PC-9 (cell line): ENCODE measurements at regions of chr3 and their contacts with region 1.

Region 1: GRCh38 chr3:188954590-188955208 is 217.1 kb upstream of the TPRG1 start:
- DNase-seq: peak; percentile 67 to 85
- H3K4me3 ChIP-seq: no peak overlapping the region
- H3K27ac ChIP-seq: no peak overlapping the region
- H3K4me1 ChIP-seq: peaks cover 21% of the 10 kb centered on the region
- H3K27me3 ChIP-seq: no peaks in the 10 kb centered on the region
- CTCF ChIP-seq: peak; percentile 98

Region 2: GRCh38 chr3:187738331-187739093 is 1216.2 kb before region 1 on chr3:
- CTCF ChIA-PET with region 1: interaction called, 129 read pairs
- POLR2A ChIA-PET with region 1: interaction called, 11 read pairs
- intact Hi-C with region 1: loop called (anchors 1 kb)
- DNase-seq: peak; percentile 82 to 87
- H3K4me3 ChIP-seq: peak overlapping the region; percentile 53
- H3K27ac ChIP-seq: 0 out of 2 replicates have a peak overlapping the region, but pooled peaks have one; percentile 3
- H3K4me1 ChIP-seq: peaks cover 55% of the 10 kb centered on the region
- H3K27me3 ChIP-seq: no peaks in the 10 kb centered on the region
- CTCF ChIP-seq: peak; percentile 85

Region 3: DNA sequence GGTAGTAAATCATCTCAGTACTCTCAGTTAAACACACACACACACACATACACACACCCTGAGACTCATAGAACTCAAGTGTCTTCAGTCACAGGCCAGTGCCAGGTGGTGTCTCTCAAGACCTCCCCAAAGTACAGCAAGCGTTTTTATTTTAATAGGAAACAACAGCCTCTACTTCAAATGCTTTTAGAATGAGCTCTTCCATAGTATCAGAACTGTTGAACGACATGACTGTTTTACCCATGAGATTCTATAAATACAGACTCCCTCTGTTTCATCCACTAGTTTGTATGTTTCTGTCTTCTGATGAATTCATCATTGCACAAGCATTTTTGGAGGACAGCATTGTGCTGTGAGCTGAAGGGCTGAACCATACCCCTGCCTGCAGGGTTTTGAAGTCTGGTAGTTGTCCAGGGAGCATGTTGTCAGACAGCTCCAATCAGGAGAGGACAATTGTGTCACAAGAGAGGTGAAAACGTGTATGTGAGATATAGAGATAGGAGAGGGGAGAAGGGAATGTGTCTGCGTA is 1008.5 kb before region 1 on chr3:
- CTCF ChIA-PET with region 1: no interaction called
- POLR2A ChIA-PET with region 1: no interaction called
- intact Hi-C with region 1: loop called (anchors 10 kb)
- DNase-seq: peak in 1 of 2 experiments; percentile 57
- H3K4me3 ChIP-seq: peak overlapping the region; percentile 45; the same call in 1 of the 2 replicates
- H3K27ac ChIP-seq: peak overlapping the region; percentile 94
- H3K4me1 ChIP-seq: peaks cover 67% of the 10 kb centered on the region
- H3K27me3 ChIP-seq: no peaks in the 10 kb centered on the region
- CTCF ChIP-seq: no peak

Region 4: GRCh38 chr3:188270423-188270972 is 684.2 kb before region 1 on chr3:
- CTCF ChIA-PET with region 1: no interaction called
- POLR2A ChIA-PET with region 1: no interaction called
- intact Hi-C with region 1: loop called (anchors 1 kb)
- DNase-seq: peak; percentile 80 to 87
- H3K4me3 ChIP-seq: no peak overlapping the region
- H3K27ac ChIP-seq: no peak overlapping the region
- H3K4me1 ChIP-seq: peaks cover 43% of the 10 kb centered on the region
- H3K27me3 ChIP-seq: no peaks in the 10 kb centered on the region
- CTCF ChIP-seq: no peak

Region 5: DNA sequence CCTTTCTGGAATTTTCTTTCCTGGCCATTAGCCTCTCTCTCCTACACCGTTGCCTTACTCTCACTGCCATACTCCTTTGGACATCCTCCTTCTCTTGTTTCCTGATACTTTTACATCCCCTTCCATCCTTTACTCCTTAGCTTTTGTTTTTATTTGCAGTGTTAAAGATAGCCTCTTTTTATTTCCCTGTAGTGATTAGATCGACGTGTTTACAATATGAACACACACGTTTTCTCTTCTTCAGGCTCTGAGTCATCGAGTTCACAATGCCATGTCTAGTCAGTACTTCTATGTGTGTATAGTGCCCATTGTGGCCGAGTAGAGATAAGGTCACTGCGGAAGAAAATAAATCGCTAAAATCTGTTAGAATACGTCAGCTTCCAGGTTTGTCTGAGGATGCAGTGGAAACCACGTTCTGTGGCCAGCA is 592.3 kb before region 1 on chr3:
- CTCF ChIA-PET with region 1: no interaction called
- POLR2A ChIA-PET with region 1: no interaction called
- intact Hi-C with region 1: loop called (anchors 2 kb)
- DNase-seq: peak; percentile 41 to 87
- H3K4me3 ChIP-seq: no peak overlapping the region
- H3K27ac ChIP-seq: peak overlapping the region; percentile 17; the same call in 1 of the 2 replicates
- H3K4me1 ChIP-seq: peaks cover 9% of the 10 kb centered on the region
- H3K27me3 ChIP-seq: no peaks in the 10 kb centered on the region
- CTCF ChIP-seq: 0 out of 2 replicates have a peak, but pooled peaks have one; percentile 38

Region 6: DNA sequence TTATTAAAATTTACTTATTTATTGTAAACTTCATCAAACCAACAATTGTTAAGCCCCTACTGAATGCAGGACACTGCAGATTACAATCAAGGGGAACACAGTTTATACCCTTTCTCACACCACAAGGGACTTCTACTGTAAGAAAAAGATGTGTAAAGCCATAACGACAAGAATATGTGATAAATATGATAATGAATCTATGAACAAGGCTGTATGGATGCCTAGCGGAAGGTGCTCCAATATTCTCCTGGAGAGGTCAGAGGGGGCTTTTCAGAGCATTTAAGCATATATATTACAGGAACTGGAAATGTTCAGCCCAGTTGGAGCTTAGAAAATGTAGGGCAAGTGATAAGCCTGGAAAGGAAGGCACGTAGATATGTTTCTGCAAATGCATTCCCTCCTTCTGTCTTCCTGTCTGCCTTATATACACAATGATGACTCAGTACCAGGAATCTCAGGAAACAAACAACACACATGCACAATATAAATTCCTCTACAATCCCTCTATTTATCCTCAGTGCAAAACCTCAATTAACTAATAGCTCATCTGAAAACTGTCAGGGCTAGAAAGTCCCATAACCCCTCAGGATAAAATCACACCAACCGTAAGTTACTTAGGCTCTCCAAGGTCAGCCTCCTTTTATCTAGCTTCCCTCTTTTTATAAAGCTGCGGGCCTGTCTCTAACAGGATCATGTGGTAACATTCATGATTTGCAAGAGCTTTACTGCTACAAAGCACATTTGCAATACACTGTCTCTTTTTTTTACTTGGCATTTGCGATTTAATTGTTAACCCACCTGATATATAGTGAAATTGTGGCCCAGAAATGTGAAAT is 407.6 kb before region 1 on chr3:
- CTCF ChIA-PET with region 1: no interaction called
- POLR2A ChIA-PET with region 1: no interaction called
- intact Hi-C with region 1: no loop called
- DNase-seq: peak; percentile 4 to 86
- H3K4me3 ChIP-seq: no peak overlapping the region
- H3K27ac ChIP-seq: peak overlapping the region; percentile 13
- H3K4me1 ChIP-seq: peaks cover 16% of the 10 kb centered on the region
- H3K27me3 ChIP-seq: no peaks in the 10 kb centered on the region
- CTCF ChIP-seq: no peak

Region 7: DNA sequence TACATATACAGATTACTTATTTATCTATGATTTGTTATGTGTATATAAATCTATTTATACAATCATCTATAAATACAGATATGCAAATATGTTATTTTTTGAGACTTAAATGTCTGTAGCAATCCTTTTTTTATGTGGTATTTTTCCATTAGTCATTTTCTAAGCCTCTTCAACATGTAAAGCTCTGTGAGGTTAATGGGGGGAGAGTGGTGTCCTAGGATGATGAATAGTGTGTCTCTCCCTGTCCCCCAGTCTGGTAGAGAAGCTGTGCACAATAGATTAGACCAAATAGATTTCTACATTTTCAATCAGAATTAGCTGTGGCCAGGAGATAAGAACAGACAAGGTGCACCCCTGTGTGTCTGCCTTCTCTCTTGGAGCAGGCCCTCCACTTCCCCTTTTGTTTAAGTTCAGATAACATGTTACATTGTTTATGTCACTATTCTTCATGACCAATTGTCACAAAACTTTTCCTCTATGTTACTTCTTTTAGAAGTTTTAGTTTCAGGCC is 346.8 kb before region 1 on chr3:
- CTCF ChIA-PET with region 1: no interaction called
- POLR2A ChIA-PET with region 1: no interaction called
- intact Hi-C with region 1: no loop called
- DNase-seq: no peak
- H3K4me3 ChIP-seq: no peak overlapping the region
- H3K27ac ChIP-seq: no peak overlapping the region
- H3K4me1 ChIP-seq: no peaks in the 10 kb centered on the region
- H3K27me3 ChIP-seq: no peaks in the 10 kb centered on the region
- CTCF ChIP-seq: no peak

Region 8: DNA sequence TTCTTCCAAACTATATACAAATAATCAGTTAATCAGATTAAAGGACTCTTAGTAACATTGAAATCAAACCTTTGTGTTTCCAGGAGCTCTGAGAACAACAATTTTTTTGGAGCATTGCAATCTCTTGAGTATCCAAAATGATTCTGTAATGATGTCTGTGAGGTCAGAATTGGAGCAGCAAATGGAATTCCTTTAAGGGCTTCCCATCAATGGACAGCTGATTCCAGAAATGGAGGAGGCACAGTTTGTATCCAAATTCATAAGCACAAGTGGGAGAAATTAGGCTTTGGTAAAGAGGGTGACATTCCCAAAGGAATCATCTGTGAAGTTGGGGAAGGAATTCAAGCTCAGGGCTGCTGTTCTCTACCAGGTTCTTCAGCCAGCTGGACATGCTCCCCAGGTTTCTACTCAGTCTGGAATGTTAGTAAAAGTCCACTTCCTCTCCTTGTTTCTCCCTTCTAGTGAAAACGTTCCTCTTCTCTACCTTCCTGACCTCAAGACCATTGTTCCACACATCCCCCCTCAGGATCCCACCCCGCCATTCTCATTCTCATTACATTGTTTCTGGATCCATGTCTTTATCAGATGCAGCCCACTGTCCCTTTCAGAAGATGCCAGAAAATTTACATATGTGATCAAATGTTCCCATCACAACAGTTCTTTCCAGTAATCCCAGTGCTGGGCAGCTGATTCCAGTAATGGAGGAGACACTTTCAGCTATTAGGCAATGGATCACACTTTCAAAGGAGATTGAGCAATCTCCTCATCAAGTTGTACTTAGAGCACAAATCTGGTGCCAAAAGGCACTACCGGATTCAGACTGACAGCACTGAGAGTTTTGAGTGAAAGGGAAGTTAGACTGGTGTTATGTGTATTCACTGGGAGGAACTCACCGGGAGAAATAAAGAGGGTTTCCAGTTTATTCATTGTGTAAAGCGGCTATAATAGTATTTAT is 174.2 kb before region 1 on chr3:
- CTCF ChIA-PET with region 1: no interaction called
- POLR2A ChIA-PET with region 1: no interaction called
- intact Hi-C with region 1: no loop called
- DNase-seq: no peak
- H3K4me3 ChIP-seq: no peak overlapping the region
- H3K27ac ChIP-seq: no peak overlapping the region
- H3K4me1 ChIP-seq: no peaks in the 10 kb centered on the region
- H3K27me3 ChIP-seq: no peaks in the 10 kb centered on the region
- CTCF ChIP-seq: no peak

Region 9: DNA sequence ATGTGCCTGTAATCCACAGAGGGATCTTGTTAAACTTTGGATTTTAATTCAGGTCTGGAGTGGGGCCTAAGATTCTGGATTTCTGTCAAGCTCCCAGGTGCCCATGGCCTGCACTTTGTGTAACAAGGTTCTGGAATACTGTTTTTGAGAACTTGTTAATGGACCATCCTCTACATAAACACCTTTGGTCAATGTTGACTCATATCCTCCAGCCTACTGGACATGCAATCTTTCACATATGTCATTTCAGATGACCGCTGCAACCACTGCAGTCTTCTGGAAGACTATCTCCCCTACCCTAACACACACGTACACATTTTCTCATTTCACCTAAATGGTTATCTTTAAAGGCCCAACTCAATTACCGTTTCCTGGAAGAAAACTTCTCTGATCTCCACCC is 85.1 kb before region 1 on chr3:
- CTCF ChIA-PET with region 1: no interaction called
- POLR2A ChIA-PET with region 1: no interaction called
- intact Hi-C with region 1: no loop called
- DNase-seq: no peak
- H3K4me3 ChIP-seq: no peak overlapping the region
- H3K27ac ChIP-seq: no peak overlapping the region
- H3K4me1 ChIP-seq: no peaks in the 10 kb centered on the region
- H3K27me3 ChIP-seq: no peaks in the 10 kb centered on the region
- CTCF ChIP-seq: no peak

Region 10: DNA sequence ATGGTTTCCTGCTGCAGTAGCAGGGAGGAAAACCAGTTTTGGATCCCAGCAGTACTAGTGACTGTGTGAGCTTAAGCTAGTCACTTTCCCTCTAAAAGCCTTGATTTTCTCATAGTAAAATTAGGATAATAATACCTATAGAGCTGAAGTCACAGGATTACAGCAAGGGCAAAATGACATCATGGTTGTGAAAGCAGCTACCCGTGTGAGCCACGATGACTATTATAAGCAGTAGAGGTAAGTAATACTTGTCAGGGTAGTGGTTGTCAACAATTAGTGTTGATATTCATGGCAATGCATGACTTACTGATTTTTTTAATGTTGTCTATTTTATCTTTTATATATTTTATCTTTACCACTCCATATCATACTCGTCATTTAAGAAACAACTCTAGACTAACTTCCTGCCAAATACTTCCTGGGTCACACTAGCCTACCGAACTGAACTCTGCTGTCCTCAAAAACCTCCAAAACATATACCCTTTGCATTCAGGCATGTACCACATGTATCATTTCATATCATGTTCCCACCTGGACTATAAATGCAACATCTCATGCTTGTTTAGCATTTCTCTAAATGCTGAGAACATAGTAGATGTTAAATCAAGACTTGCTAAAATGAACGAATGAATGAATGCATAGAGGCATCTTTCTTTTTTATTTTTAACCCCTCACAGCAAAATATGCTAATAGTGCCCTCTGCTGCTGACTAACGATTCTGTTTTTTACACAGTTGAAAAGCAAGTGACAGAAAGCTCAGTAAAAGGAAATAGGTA is 993.4 kb after region 1 on chr3:
- CTCF ChIA-PET with region 1: no interaction called
- POLR2A ChIA-PET with region 1: no interaction called
- intact Hi-C with region 1: loop called (anchors 10 kb)
- DNase-seq: peak; percentile 40 to 56
- H3K4me3 ChIP-seq: no peak overlapping the region
- H3K27ac ChIP-seq: peak overlapping the region; percentile 39
- H3K4me1 ChIP-seq: peaks cover 42% of the 10 kb centered on the region
- H3K27me3 ChIP-seq: no peaks in the 10 kb centered on the region
- CTCF ChIP-seq: peak; percentile 94